CD8-positive, alpha-beta T cell (primary cell): ENCODE measurements at regions of chr11 and their contacts with region 1.

Region 1: DNA sequence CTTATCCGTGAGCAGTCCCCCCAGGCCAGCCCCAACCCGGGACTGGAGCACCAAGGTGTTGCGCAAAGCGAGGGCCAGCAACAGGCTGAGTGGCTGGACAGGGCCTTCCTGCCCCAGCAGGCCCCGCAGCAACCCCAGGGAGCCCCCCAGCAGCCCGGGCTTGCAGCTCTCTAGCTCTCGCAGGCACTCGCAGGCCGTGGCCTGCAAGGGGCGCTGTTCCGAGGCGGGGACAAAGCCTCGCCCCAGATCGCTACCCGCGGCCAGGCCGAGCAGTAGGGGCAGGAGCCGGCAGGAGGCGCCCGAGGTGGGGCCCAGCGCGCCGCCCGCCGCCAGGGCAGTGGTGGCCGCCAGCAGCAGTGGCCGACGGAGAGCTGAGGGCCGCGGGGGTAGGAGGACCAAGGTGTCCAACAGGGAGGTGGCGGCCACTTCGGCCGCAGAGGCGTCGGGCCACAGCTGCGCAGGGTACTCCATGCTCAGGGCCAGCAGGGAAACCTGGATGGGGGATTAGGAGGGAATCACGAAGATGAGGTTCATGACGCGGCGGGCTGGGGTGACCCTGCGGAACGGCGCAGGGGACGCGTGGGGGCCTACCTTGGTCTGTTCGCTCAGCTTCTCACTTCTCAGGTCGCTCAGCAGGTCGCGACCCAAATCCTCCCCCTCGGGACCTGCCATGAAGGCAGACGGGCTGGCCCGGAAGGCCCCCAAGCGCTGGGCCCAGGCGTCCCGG is 762 bp downstream of the AP5B1 start:
- DNase-seq: peak; percentile 46 to 88 (median 76)
- ATAC-seq: peak; percentile 74
- H3K4me3 ChIP-seq: peak overlapping the region; percentile 85
- H3K4me3 Mint-ChIP-seq: peak overlapping the region; percentile 86
- H3K27ac ChIP-seq: peak overlapping the region; percentile 31 to 52
- H3K27ac Mint-ChIP-seq: peak overlapping the region; percentile 77
- H3K4me1 ChIP-seq: peaks cover 17% of the 10 kb centered on the region
- H3K4me1 Mint-ChIP-seq: peaks cover 8% of the 10 kb centered on the region
- H3K27me3 ChIP-seq: no peaks in the 10 kb centered on the region
- H3K27me3 Mint-ChIP-seq: peaks cover under 1% of the 10 kb centered on the region
- CTCF ChIP-seq: peak; percentile 97

Region 2: DNA sequence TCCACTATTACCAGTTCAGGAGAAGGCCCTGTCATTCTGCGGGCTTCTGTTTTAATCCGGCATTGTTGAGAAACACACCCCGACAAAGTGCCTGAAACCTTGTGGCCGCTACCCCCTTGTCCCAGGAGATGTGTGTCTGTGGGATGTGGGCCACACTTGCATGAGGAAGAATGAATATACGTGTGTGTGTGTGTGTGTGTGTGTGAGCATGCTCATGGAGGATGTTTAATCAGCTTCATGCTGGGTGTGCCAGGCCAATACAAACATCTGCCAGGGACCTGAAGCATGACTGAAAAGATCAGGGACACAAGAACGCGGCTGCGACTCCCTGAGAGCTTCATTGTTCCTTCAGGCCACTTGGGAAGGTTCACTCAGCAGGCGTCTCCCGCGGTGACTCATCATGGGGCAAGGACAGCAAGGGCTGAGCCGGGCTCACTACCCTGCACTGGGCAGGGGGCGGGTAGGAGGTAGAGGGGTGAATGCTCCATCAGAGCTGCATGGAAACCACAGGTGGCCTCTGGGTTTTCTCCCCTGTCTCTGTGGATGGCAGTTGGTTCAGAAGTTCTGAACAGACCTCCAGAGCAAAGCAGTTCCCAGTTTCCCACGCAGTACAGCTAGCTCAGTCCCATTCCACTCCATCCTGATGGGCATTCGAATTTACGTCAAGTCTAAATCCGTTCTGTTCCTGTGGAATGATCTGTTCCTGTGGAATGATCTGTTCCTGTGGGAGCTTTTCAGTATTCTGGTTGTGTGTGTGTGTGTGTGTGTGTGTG is 288.2 kb before region 1 on chr11:
- CTCF ChIA-PET with region 1: no interaction called
- POLR2A ChIA-PET with region 1: no interaction called
- intact Hi-C with region 1: no loop called
- DNase-seq: no peak
- ATAC-seq: no peak
- H3K4me3 ChIP-seq: no peak overlapping the region
- H3K4me3 Mint-ChIP-seq: no peak overlapping the region
- H3K27ac ChIP-seq: no peak overlapping the region
- H3K27ac Mint-ChIP-seq: no peak overlapping the region
- H3K4me1 ChIP-seq: peaks cover 26% of the 10 kb centered on the region
- H3K4me1 Mint-ChIP-seq: peaks cover 33% of the 10 kb centered on the region
- H3K27me3 ChIP-seq: no peaks in the 10 kb centered on the region
- H3K27me3 Mint-ChIP-seq: no peaks in the 10 kb centered on the region
- CTCF ChIP-seq: no peak

Region 3: GRCh38 chr11:65766535-65766934 is 13.5 kb before region 1 on chr11:
- CTCF ChIA-PET with region 1: interaction called, 26 read pairs
- POLR2A ChIA-PET with region 1: interaction called, 5 read pairs
- intact Hi-C with region 1: no loop called
- DNase-seq: no peak
- ATAC-seq: no peak
- H3K4me3 ChIP-seq: no peak overlapping the region
- H3K4me3 Mint-ChIP-seq: no peak overlapping the region
- H3K27ac ChIP-seq: no peak overlapping the region
- H3K27ac Mint-ChIP-seq: no peak overlapping the region
- H3K4me1 ChIP-seq: peaks cover 5% of the 10 kb centered on the region
- H3K4me1 Mint-ChIP-seq: peaks cover 3% of the 10 kb centered on the region
- H3K27me3 ChIP-seq: no peaks in the 10 kb centered on the region
- H3K27me3 Mint-ChIP-seq: peaks cover under 1% of the 10 kb centered on the region
- CTCF ChIP-seq: no peak

Region 4: DNA sequence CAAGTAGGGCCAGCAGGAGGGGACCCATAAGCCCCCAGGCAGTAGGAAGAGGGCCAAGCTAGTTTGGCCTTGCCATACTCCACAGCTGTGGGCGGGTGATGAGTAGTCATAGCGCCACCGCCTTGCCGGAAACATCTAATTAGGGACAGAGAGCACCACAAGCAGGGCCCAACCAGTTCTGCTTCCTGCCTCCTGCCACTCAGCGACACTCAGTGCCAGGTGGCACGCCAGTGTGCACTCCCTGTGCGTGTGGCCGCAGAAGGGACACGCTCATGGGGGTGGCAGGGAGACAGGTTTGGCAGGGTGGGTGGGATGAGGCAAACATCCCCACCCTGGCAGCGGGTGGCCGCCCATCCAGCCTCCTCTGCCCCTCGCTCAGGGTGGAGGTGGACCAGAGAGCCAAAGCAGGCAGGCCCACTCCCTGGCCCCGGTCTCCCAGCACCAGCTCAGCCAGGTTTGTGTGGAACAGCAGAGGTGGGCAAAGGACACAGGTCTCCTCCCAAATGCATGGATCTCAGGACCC is 11.7 kb after region 1 on chr11:
- CTCF ChIA-PET with region 1: interaction called, 44 read pairs
- POLR2A ChIA-PET with region 1: interaction called, 8 read pairs
- intact Hi-C with region 1: no loop called
- DNase-seq: peak in 4 of 9 experiments; percentile 36 to 58 (median 48)
- ATAC-seq: peak; percentile 66
- H3K4me3 ChIP-seq: no peak overlapping the region
- H3K4me3 Mint-ChIP-seq: no peak overlapping the region
- H3K27ac ChIP-seq: no peak overlapping the region
- H3K27ac Mint-ChIP-seq: no peak overlapping the region
- H3K4me1 ChIP-seq: peaks cover 24% of the 10 kb centered on the region
- H3K4me1 Mint-ChIP-seq: peaks cover 8% of the 10 kb centered on the region
- H3K27me3 ChIP-seq: peaks cover 23 to 25% of the 10 kb centered on the region in 2 experiments
- H3K27me3 Mint-ChIP-seq: peaks cover 31% of the 10 kb centered on the region
- CTCF ChIP-seq: no peak

Region 5: GRCh38 chr11:65826962-65827735 is 47.1 kb after region 1 on chr11:
- CTCF ChIA-PET with region 1: interaction called, 13 read pairs
- POLR2A ChIA-PET with region 1: no interaction called
- intact Hi-C with region 1: no loop called
- DNase-seq: no peak
- ATAC-seq: no peak
- H3K4me3 ChIP-seq: no peak overlapping the region
- H3K4me3 Mint-ChIP-seq: no peak overlapping the region
- H3K27ac ChIP-seq: no peak overlapping the region
- H3K27ac Mint-ChIP-seq: no peak overlapping the region
- H3K4me1 ChIP-seq: no peaks in the 10 kb centered on the region
- H3K4me1 Mint-ChIP-seq: no peaks in the 10 kb centered on the region
- H3K27me3 ChIP-seq: no peaks in the 10 kb centered on the region
- H3K27me3 Mint-ChIP-seq: no peaks in the 10 kb centered on the region
- CTCF ChIP-seq: no peak